KBM-7 (cell line): ENCODE measurements at regions of chr3 and their contacts with region 1.

Region 1: GRCh38 chr3:99866261-99866761 is 48.6 kb downstream of the CMSS1 start:
- DNase-seq: peak; percentile 35

Region 2: DNA sequence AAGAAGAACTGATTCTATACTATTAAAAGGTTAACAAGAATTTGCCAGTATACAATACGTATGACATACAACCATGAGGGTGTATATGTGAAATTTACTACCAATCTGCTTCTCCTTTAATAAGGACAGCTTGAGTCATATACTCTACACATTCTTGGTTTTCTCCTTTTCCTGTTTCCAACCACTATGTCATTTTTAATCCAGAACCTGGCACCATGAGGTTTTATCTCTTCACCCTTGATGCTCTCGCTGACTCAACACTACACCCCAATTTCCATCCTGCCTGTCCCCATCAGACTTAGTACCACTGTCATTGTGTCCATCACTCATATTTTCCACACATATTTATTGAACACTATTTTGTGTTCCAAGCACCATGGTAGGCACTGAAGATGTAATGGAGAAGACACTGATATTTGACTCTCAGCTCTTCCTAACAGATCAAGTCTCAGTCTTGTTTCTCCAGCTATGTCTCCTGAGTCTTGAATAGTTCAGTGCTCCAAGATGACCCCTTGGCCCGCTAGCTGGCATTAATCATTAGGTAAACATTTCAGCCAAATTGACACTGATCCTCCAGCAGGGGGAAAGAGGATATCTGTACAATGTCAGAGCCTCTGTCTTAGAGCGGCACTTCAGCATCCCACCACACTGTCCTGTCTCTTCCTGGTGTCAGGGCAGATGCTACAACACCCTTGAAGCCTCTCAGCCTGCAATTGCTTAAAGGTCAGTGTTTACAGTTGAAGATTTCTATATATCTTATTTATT is 239.1 kb before region 1 on chr3:
- in situ Hi-C with region 1: no loop called
- DNase-seq: no peak

Region 3: DNA sequence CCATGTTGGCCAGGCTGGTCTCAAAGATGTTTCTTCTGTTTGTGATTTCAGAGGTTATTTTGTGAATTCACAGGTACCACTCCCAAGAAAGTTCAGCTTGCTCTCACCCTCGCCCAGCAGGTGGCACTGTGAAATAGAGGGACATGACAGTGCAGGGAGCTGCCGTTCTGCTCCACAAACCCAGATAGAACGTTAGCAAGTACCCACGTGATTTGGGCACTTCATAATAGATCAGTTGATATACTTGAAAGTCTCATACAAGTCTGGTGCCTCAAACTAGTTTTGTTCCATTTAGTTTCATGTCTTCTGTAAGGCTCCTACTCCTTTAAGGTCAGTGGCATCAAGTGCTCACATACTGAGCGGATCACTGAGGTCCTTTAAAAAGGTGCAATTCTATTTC is 202.5 kb after region 1 on chr3:
- in situ Hi-C with region 1: loop called (anchors 25 kb)
- DNase-seq: peak; percentile 81

Region 4: DNA sequence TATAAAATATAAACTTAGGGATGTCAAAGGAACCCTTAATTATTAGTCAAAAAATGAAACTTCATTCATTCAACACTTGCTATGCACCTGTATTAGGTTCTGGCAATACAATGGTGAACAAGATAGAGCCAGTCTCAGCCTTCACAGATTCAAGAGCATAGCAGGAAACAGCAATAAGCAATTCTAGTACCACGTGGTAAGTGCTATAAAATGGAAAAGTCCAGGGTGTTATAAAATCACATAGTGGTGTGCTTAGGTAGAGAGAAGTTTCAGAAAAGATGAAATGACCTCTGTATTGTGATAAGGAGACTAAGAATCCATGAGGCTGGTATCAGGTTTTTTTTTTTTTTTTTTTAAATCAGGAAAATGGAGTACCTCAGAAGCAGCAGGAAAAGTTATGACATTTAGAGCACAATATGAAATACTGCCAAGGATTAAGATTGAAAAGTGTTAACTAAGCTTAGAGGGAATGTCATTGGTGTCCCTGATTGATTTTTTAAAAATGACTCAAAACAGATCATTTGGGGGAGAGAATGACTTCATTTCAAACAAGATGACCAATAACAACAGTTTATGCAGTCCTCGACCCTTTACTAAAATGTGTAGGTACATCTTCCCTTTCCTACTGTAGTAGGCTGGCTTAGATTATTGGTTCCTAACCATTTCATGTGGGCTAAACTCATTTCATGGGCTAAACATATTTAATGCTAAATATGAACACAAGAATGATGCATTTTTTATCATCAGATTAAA is 529.5 kb after region 1 on chr3:
- in situ Hi-C with region 1: no loop called
- DNase-seq: no peak